CD8-positive, alpha-beta memory T cell (primary cell): ENCODE measurements at regions of chr11 and their contacts with region 1.

Region 1: DNA sequence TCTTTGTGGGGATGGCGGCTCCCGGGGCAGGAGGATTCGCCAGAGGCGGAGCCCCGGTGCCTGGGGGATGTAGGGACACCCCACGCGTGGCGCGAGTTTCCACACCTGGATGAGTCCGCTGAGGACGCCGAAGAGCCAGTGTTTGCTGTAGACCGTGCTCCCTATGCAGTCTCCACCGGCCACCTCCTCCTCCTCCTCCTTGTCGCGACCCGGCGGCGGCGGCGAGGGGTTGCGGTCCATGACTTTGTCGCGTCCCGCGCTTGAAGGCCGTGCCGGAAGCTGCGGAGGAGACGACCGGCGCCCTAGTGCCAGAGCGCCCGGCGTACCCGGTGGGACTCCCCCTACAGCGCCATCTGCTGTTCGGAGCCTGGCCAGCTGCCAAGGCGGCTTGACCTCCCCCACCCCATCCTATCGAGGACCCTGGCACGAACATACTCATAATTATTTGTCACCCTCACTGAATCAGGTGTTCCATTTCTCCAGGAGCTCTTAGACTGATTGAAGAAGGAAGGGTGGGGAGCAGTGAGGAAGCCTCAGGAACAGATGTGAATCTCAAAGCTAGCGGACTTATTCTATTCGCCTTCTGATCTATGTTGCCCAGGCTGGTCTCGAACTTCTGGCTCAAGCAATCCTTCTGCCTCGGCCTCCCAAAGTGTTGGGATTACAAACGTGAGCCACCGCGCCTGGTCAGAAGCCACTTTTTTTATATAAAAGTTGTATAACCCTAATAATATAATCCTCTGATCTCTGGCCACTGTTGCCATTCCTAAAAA is at the start of gene SAAL1:
- DNase-seq: peak; percentile 80 to 89 (median 83)
- H3K4me3 ChIP-seq: peak within 1 kb of the TSS; percentile 96
- H3K4me3 Mint-ChIP-seq: peak within 1 kb of the TSS; percentile 92 to 97 (median 94)
- H3K27ac ChIP-seq: peak within 1 kb of the TSS; percentile 72
- H3K27ac Mint-ChIP-seq: peak within 1 kb of the TSS; percentile 73 to 97 (median 90)
- H3K4me1 ChIP-seq: peaks cover 19% of the 10 kb centered on the region
- H3K4me1 Mint-ChIP-seq: peaks cover 25 to 55% (median 43%) of the 10 kb centered on the region in 3 donors
- H3K27me3 ChIP-seq: no peaks in the 10 kb centered on the region
- H3K27me3 Mint-ChIP-seq: peaks cover 0 to 12% of the 10 kb centered on the region in 2 donors
- total RNA-seq, gene SAAL1: 42.3 to 46.5 TPM

Region 2: DNA sequence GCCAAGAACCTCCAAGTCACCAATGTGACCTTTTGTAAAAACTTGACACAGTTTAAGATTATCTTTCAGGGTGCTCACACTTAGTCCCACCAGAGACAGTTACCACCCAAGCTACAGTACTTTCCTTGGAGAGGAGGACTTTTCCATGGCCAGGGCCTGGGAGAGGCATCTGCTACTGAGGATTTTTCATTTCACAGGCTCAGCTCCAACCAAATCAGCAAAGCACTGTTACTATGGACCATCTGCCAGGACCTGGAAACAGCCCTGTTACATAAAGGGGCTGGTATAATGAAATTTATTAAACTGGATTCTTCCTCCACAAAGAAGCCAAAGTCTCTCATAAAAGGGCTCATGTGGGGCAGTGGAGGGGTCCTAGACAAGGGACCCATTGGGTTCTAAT is 131.7 kb before region 1 on chr11:
- CTCF ChIA-PET with region 1: no interaction called
- POLR2A ChIA-PET with region 1: no interaction called
- DNase-seq: no peak
- H3K4me3 ChIP-seq: no peak overlapping the region
- H3K4me3 Mint-ChIP-seq: no peak overlapping the region
- H3K27ac ChIP-seq: no peak overlapping the region
- H3K27ac Mint-ChIP-seq: no peak overlapping the region
- H3K4me1 ChIP-seq: no peaks in the 10 kb centered on the region
- H3K4me1 Mint-ChIP-seq: no peaks in the 10 kb centered on the region
- H3K27me3 ChIP-seq: no peaks in the 10 kb centered on the region
- H3K27me3 Mint-ChIP-seq: no peaks in the 10 kb centered on the region

Region 3: GRCh38 chr11:18012863-18013781 is 92.9 kb before region 1 on chr11 and contains the start of gene SERGEF:
- CTCF ChIA-PET with region 1: interaction called, 11 read pairs
- POLR2A ChIA-PET with region 1: interaction called, 11 read pairs
- DNase-seq: peak; percentile 90 to 95 (median 93)
- H3K4me3 ChIP-seq: peak within 1 kb of the TSS; percentile 77
- H3K4me3 Mint-ChIP-seq: peak within 1 kb of the TSS; percentile 95 to 100 (median 98)
- H3K27ac ChIP-seq: peak within 1 kb of the TSS; percentile 80
- H3K27ac Mint-ChIP-seq: peak within 1 kb of the TSS; percentile 88 to 100 (median 99)
- H3K4me1 ChIP-seq: peaks cover 8% of the 10 kb centered on the region
- H3K4me1 Mint-ChIP-seq: peaks cover 27 to 43% (median 41%) of the 10 kb centered on the region in 3 donors
- H3K27me3 ChIP-seq: no peaks in the 10 kb centered on the region
- H3K27me3 Mint-ChIP-seq: no peaks in the 10 kb centered on the region
- total RNA-seq, gene SERGEF: 30.0 to 34.5 TPM

Region 4: DNA sequence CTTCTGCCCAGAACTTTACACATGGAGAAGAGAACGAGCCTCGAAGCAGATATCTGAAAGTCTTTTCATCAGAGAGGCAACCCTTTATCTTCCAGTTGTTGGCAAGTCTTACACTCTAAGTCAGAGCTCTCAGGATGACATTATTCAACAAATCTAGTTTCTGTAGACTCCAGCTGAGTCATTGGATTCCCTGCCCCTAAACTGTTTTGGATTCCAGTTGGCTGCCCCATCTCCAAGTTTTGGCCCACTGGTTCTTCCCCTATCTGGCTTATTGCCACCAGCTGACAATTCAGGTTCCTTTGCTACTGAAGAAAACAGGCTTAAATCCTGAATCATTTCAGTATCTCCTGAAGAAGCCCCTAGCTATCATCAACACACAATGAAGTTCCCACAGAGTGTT is 14.3 kb before region 1 on chr11:
- CTCF ChIA-PET with region 1: interaction called, 10 read pairs
- POLR2A ChIA-PET with region 1: no interaction called
- DNase-seq: no peak
- H3K4me3 ChIP-seq: no peak overlapping the region
- H3K4me3 Mint-ChIP-seq: no peak overlapping the region
- H3K27ac ChIP-seq: no peak overlapping the region
- H3K27ac Mint-ChIP-seq: peak overlapping the region in 1 of 8 donors; percentile 53
- H3K4me1 ChIP-seq: no peaks in the 10 kb centered on the region
- H3K4me1 Mint-ChIP-seq: peaks cover 0 to 3% (median 0%) of the 10 kb centered on the region in 3 donors
- H3K27me3 ChIP-seq: no peaks in the 10 kb centered on the region
- H3K27me3 Mint-ChIP-seq: no peaks in the 10 kb centered on the region

Region 5: DNA sequence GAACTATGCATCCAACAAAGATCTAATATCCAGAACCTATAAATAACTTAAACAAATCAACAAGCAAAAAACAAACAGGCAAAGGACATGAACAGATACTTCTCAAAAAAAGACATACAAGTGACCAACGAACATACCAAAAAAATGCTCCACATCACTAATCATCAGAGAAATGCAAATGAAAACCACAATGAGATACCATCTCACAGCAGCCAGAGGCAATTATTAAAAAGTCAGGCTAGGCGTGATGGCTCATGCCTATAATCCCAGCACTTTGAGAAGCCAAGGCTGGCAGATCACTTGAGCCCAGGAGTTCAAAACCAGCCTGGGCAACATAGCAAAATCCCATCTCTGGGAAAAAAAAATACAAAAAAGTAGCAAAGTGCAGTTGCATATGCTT is 119.9 kb after region 1 on chr11:
- CTCF ChIA-PET with region 1: no interaction called
- POLR2A ChIA-PET with region 1: no interaction called
- DNase-seq: no peak
- H3K4me3 ChIP-seq: no peak overlapping the region
- H3K4me3 Mint-ChIP-seq: no peak overlapping the region
- H3K27ac ChIP-seq: no peak overlapping the region
- H3K27ac Mint-ChIP-seq: no peak overlapping the region
- H3K4me1 ChIP-seq: no peaks in the 10 kb centered on the region
- H3K4me1 Mint-ChIP-seq: no peaks in the 10 kb centered on the region
- H3K27me3 ChIP-seq: peaks cover 4% of the 10 kb centered on the region
- H3K27me3 Mint-ChIP-seq: peaks cover 3 to 6% of the 10 kb centered on the region in 2 donors